PC-3 (cell line): ENCODE measurements at regions of chr1 and their contacts with region 1.

Region 1: DNA sequence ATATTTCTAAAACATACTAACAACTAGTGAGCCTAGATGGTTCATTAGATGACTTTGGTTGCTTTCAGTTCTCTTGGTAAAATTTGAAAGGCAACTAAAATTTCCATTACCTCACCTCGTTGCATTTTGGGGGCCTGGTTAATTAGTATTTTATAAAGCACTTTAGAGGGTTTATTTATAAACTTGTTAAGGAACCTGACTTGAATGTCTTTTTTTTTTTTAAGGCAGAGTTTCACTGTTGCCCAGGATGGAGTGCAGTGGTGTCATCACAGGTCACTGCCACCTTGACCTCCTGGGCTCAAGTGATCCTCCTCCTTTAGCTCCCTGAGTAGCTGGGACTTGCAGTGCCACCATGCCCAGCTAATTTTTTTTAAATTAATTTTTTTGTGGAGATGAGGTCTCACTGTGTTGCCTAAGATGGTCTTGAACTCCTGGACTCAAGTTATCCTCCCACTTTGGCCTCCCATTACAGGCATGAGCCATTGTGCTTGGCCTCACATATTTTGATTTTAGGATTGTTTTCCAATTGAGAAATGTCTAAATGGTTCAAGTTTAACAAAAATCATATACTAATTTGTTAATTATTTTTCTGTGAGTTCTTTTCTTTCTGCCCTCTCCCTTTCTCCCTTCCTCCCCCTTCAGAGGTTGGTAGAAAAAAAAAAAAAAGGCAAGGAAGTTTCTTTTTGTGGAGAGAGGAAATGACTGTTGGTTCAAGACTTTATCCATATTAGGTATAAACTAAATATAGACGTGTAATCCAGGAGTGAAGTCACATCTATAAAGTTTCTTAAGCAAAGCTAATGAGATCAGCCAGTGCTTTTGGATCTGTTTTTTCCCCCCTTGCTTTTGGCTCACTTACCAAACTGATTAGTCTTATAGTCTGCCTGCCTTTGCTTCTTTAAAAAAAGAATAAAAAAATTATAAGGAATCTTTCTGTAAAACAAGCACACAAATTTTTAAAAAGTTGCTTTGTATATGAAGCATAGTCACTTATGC is 24.7 kb downstream of the CLIC4 start:
- DNase-seq: peak; percentile 79
- ATAC-seq: peak; percentile 92
- H3K4me3 ChIP-seq: no peak overlapping the region
- H3K27ac ChIP-seq: peak overlapping the region; percentile 33
- H3K4me1 ChIP-seq: peaks cover 17% of the 10 kb centered on the region
- H3K27me3 ChIP-seq: no peaks in the 10 kb centered on the region
- CTCF ChIP-seq: no peak

Region 2: DNA sequence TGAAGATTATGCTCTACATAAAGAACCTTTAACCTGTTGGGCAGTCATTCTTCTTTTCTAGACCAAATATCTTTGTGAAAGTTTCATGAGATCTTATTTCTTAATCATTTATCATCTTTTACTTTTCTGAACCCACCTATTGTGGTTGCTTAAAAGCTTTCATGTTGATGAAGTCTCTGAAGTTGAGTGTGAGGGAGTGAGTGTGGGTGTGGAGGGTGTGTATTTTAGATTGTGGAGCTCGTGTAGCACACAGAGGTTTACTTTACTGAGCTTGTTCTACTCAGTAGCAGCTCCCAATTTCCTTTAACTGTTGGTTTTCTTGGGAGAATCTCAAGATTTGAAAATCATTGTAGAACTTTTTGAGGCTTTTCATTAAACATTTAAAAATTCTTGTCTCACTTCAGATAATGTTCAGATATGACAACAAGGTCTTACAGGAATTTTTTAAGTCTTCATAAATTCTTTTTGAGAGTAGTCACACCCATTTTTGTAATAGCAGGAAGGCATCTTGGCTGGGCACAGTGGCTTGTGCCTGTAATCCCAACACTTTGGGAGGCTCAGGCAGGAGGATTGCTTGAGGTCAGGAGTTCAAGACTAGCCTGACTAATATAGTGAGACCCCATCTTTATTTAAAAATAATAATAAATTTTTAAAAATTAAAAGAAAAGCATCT is 109.8 kb before region 1 on chr1:
- CTCF ChIA-PET with region 1: no interaction called
- POLR2A ChIA-PET with region 1: interaction called, 12 read pairs
- intact Hi-C with region 1: no loop called
- DNase-seq: no peak
- ATAC-seq: no peak
- H3K4me3 ChIP-seq: no peak overlapping the region
- H3K27ac ChIP-seq: no peak overlapping the region
- H3K4me1 ChIP-seq: no peaks in the 10 kb centered on the region
- H3K27me3 ChIP-seq: no peaks in the 10 kb centered on the region
- CTCF ChIP-seq: no peak

Region 3: GRCh38 chr1:24822887-24823286 is 52.9 kb after region 1 on chr1:
- CTCF ChIA-PET with region 1: no interaction called
- POLR2A ChIA-PET with region 1: no interaction called
- intact Hi-C with region 1: loop called (anchors 10 kb)
- DNase-seq: no peak
- ATAC-seq: no peak
- H3K4me3 ChIP-seq: no peak overlapping the region
- H3K27ac ChIP-seq: no peak overlapping the region
- H3K4me1 ChIP-seq: no peaks in the 10 kb centered on the region
- H3K27me3 ChIP-seq: no peaks in the 10 kb centered on the region
- CTCF ChIP-seq: no peak